Activated CD8-positive, alpha-beta T cell treated with anti-CD3 and anti-CD28 coated beads for 36 hours (primary cell): ENCODE measurements at regions of chr5 and their contacts with region 1.

Region 1: DNA sequence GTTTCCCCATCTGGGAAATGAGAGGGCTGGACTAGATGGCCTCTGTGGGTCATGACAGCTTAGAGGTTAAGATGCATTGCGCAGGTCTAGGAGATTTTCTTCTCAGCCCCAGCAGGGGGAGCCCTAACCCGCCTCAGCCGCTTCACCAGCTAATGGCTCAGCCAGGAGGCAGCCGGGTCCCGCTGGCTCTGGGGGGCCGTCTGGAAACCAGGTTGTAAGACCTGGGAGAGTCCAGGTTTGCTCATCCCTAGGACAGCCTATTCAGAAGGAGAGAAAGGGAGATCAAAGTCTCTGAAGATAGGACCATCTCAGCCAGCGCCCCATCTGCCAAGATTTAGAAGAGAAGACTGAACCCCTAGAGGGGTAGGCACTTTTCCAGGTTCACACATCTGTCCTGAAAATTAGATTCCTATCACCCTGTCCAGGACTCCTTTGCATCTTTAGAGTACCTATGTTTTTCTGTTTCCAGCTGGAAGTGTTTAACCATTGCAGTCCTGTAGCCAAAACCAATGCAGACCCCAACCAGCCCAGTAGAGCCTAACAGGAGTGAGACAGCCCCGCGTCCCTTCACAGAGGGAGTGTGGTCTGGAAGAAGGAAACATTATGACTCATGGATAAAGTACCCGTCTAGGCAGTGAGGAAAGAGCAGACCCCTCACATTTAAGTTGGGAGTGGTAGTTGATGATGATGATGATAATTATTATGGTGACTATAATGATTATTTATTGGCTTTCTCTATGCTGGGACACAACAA is 27.5 kb downstream of the SPARC start:
- DNase-seq: peak; percentile 83
- ATAC-seq: peak; percentile 100
- H3K4me3 Mint-ChIP-seq: no peak overlapping the region
- H3K27ac Mint-ChIP-seq: no peak overlapping the region
- H3K4me1 Mint-ChIP-seq: peaks cover 9% of the 10 kb centered on the region
- H3K27me3 Mint-ChIP-seq: peaks cover 2% of the 10 kb centered on the region
- CTCF ChIP-seq: peak; percentile 82

Region 2: DNA sequence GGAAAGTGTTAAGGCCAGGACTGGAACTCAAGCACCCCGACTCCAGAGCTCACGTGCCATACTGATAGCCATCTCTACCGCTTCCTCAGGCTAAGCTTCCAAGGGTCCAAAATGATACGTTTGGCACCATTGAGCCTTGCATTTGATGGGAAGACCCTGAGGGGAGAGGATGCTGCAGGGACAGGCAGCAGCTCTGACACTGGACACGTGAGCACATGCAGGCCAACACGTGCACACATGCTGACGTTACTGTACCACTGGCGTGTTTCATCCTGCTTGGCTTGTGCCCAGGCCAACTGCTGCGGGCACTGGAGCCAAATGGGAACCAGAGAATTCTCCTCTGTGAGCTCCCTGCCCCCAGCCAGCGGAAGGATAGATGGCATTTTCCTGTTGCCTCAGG is 73.2 kb before region 1 on chr5:
- CTCF ChIA-PET with region 1: no interaction called
- POLR2A ChIA-PET with region 1: no interaction called
- intact Hi-C with region 1: no loop called
- DNase-seq: no peak
- ATAC-seq: no peak
- H3K4me3 Mint-ChIP-seq: no peak overlapping the region
- H3K27ac Mint-ChIP-seq: no peak overlapping the region
- H3K4me1 Mint-ChIP-seq: no peaks in the 10 kb centered on the region
- H3K27me3 Mint-ChIP-seq: peaks cover 1% of the 10 kb centered on the region
- CTCF ChIP-seq: no peak

Region 3: GRCh38 chr5:151671950-151672349 is 12.8 kb after region 1 on chr5:
- CTCF ChIA-PET with region 1: interaction called, 18 read pairs
- POLR2A ChIA-PET with region 1: no interaction called
- intact Hi-C with region 1: no loop called
- DNase-seq: no peak
- ATAC-seq: no peak
- H3K4me3 Mint-ChIP-seq: no peak overlapping the region
- H3K27ac Mint-ChIP-seq: no peak overlapping the region
- H3K4me1 Mint-ChIP-seq: peaks cover 3% of the 10 kb centered on the region
- H3K27me3 Mint-ChIP-seq: peaks cover 2% of the 10 kb centered on the region
- CTCF ChIP-seq: no peak

Region 4: GRCh38 chr5:151733358-151734063 is 74.3 kb after region 1 on chr5:
- CTCF ChIA-PET with region 1: interaction called, 111 read pairs
- POLR2A ChIA-PET with region 1: no interaction called
- intact Hi-C with region 1: no loop called
- DNase-seq: no peak
- ATAC-seq: no peak
- H3K4me3 Mint-ChIP-seq: no peak overlapping the region
- H3K27ac Mint-ChIP-seq: no peak overlapping the region
- H3K4me1 Mint-ChIP-seq: no peaks in the 10 kb centered on the region
- H3K27me3 Mint-ChIP-seq: no peaks in the 10 kb centered on the region
- CTCF ChIP-seq: no peak

Region 5: GRCh38 chr5:151751091-151751490 is 91.9 kb after region 1 on chr5:
- CTCF ChIA-PET with region 1: interaction called, 15 read pairs
- POLR2A ChIA-PET with region 1: no interaction called
- intact Hi-C with region 1: no loop called
- DNase-seq: no peak
- ATAC-seq: no peak
- H3K4me3 Mint-ChIP-seq: no peak overlapping the region
- H3K27ac Mint-ChIP-seq: no peak overlapping the region
- H3K4me1 Mint-ChIP-seq: peaks cover 33% of the 10 kb centered on the region
- H3K27me3 Mint-ChIP-seq: no peaks in the 10 kb centered on the region
- CTCF ChIP-seq: no peak

Region 6: DNA sequence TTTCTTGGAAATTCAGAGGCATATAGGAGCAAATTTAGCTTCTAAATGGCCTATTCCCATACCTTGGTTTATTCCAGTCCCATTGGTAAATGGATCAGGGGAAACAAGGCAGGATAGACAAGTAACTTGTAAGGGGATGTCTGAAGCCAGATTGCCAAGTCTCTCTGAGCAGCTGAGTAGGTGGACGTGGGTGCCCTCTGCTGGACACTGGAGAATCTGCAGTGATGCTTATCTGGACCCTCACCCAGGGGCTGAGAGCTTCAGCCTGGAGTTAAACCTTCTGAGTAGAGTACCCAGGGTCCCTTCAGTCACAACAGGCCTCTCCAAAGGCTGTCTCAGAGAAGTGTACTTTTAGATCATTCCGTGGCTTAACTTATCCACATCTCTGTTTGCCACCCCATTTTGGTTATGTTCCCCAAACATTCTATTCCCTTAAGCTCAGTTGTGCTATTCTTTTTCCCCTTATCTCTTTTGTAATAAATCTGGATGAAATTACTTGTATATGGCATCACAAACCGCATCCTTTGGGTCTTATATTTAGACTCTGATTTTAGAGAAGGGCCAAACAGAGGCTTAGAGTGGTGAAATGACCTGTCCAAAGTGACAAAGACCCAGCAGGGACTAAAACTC is 483.8 kb after region 1 on chr5:
- CTCF ChIA-PET with region 1: interaction called, 7 read pairs
- POLR2A ChIA-PET with region 1: no interaction called
- intact Hi-C with region 1: loop called (anchors 10 kb)
- DNase-seq: peak; percentile 72
- ATAC-seq: peak; percentile 79
- H3K4me3 Mint-ChIP-seq: no peak overlapping the region
- H3K27ac Mint-ChIP-seq: no peak overlapping the region
- H3K4me1 Mint-ChIP-seq: no peaks in the 10 kb centered on the region
- H3K27me3 Mint-ChIP-seq: peaks cover 4% of the 10 kb centered on the region
- CTCF ChIP-seq: peak; percentile 87